ENCODE measurements at regions of chr6 and their contacts with region 1.

Region 1: GRCh38 chr6:153002607-153003365 is at the start of gene MTRF1L:
- DNase-seq: peak; percentile 90 to 96
- H3K4me3 ChIP-seq: peak within 1 kb of the TSS; percentile 84 to 100 (median 98)
- H3K27ac ChIP-seq: peak within 1 kb of the TSS; percentile 69; the same call in 1 of the 2 replicates
- H3K4me1 ChIP-seq: peaks cover 0 to 3% (median 1%) of the 10 kb centered on the region in 4 experiments; a peak in 2 of 7 replicates
- H3K27me3 ChIP-seq: no peaks in the 10 kb centered on the region
- CTCF ChIP-seq: no peak
- EP300 ChIP-seq: no peak
- POLR2A ChIP-seq: peak; percentile 47 to 79; a peak in 2 of 3 replicates
- RAD21 ChIP-seq: no peak
- total RNA-seq, gene MTRF1L: 24.0 and 26.5 TPM in 2 replicates

Region 2: GRCh38 chr6:152705327-152705726 is 297.5 kb before region 1 on chr6:
- CTCF ChIA-PET with region 1: no interaction called
- POLR2A ChIA-PET with region 1: no interaction called
- DNase-seq: no peak
- H3K4me3 ChIP-seq: no peak overlapping the region
- H3K27ac ChIP-seq: no peak overlapping the region
- H3K4me1 ChIP-seq: no peaks in the 10 kb centered on the region
- H3K27me3 ChIP-seq: no peaks in the 10 kb centered on the region
- CTCF ChIP-seq: no peak
- EP300 ChIP-seq: no peak
- POLR2A ChIP-seq: no peak
- RAD21 ChIP-seq: no peak

Region 3: GRCh38 chr6:152982768-152983636 is 19.8 kb before region 1 on chr6 and contains the start of gene FBXO5:
- CTCF ChIA-PET with region 1: interaction called, 9 read pairs
- POLR2A ChIA-PET with region 1: interaction called, 103 read pairs
- DNase-seq: peak; percentile 94
- H3K4me3 ChIP-seq: peak within 1 kb of the TSS; percentile 80 to 97 (median 88)
- H3K27ac ChIP-seq: peak within 1 kb of the TSS; percentile 92
- H3K4me1 ChIP-seq: peaks cover 2 to 5% (median 2%) of the 10 kb centered on the region in 4 experiments; a peak in 3 of 7 replicates
- H3K27me3 ChIP-seq: no peaks in the 10 kb centered on the region
- CTCF ChIP-seq: peak in 1 of 3 experiments; percentile 4; a peak in 1 of 4 replicates
- EP300 ChIP-seq: no peak
- POLR2A ChIP-seq: peak; percentile 86 to 97
- RAD21 ChIP-seq: no peak
- total RNA-seq, gene FBXO5: 53.4 and 55.1 TPM in 2 replicates

Region 4: DNA sequence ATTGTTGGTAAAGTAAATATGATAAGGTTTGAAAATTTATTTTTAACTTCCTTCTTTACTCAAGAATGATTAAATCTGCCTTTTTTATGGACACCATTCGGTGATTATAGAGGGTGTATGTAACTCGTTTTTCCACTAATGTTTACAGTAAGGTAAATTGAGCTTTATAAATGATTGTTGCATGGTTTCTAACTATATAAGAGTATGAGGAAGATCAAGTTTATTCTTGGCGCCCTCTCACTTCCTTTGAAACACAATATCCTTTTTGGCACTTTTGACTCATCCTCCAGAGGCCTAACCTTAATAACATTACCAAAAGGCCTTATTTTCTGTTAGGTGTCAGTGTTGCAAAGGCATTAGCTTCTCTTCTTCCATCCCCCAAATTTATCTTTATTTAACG is 41.5 kb after region 1 on chr6:
- CTCF ChIA-PET with region 1: no interaction called
- POLR2A ChIA-PET with region 1: no interaction called
- DNase-seq: no peak
- H3K4me3 ChIP-seq: no peak overlapping the region
- H3K27ac ChIP-seq: no peak overlapping the region
- H3K4me1 ChIP-seq: peaks cover 0 to 3% (median 0%) of the 10 kb centered on the region in 4 experiments; a peak in 1 of 7 replicates
- H3K27me3 ChIP-seq: no peaks in the 10 kb centered on the region
- CTCF ChIP-seq: no peak
- EP300 ChIP-seq: no peak
- POLR2A ChIP-seq: no peak
- RAD21 ChIP-seq: no peak

Region 5: DNA sequence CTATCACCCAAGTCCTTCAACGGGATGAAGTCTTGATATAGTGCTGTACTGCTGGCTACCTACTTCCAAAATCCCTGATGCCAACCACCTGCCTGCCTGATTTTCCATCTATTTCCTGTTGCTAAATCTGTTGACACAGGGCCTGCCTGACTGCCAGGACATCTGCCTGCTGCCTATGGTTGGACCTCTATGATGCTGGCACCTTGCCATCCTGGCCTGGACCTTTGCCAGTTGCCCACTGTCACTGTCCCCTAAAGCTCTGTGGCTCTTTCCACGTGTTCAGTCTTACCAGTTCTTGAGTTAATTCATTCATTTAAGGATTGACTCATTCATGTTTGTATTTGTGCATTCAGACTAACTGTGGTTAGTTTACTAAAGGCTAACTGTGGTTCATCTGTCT is 137.5 kb after region 1 on chr6:
- CTCF ChIA-PET with region 1: no interaction called
- POLR2A ChIA-PET with region 1: no interaction called
- DNase-seq: no peak
- H3K4me3 ChIP-seq: no peak overlapping the region
- H3K27ac ChIP-seq: no peak overlapping the region
- H3K4me1 ChIP-seq: no peaks in the 10 kb centered on the region
- H3K27me3 ChIP-seq: no peaks in the 10 kb centered on the region
- CTCF ChIP-seq: no peak
- EP300 ChIP-seq: no peak
- POLR2A ChIP-seq: no peak
- RAD21 ChIP-seq: no peak

Measured in H1 (cell line).